ENCODE measurements at regions of chr11 and their contacts with region 1.

Region 1: DNA sequence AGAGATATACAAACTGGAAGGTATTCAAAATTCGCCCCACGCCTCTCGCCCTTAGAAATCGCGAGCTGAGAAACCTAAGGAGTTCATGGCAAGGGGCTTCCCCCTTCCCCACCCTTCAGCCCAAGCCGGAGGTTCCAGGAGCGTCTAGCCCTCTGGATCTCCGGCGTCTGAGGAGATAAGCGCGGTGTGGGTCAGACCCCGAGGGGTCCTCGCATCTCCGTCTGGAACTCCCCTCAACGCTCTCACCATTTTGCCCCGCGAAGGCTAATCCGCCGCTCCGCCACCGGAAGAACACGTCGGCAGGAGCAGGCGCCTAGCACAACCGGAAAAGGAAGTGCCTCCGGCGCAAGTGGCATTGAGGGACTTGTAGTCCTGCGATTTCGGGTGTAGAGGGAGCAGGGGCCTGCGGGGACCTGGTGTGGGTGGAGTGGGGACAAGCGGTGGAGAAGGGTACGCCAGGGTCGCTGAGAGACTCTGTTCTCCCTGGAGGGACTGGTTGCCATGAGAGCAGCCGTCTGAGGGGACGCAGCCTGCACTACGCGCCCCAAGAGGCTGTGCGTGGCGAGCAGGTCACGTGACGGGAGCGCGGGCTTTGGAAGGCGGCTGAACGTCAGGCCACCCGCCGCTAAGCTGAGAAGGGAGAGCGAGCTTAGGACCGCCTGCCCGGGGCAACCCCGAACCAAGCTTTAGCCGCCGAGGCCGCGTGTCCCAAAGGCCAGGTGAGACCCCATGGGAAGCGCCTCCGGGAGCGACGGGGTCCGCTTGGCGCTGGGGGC is at the starts of genes FEN1 and TMEM258:
- DNase-seq: peak; percentile 71 to 94 (median 88)
- ATAC-seq: peak; percentile 87
- H3K4me3 ChIP-seq: peak within 1 kb of the TSS; percentile 64 to 92
- H3K4me3 Mint-ChIP-seq: peak within 1 kb of the TSS; percentile 93
- H3K27ac ChIP-seq: peak within 1 kb of the TSS; percentile 88 to 96
- H3K27ac Mint-ChIP-seq: peak within 1 kb of the TSS; percentile 97
- H3K4me1 ChIP-seq: peaks cover 15% of the 10 kb centered on the region
- H3K4me1 Mint-ChIP-seq: peaks cover 37% of the 10 kb centered on the region
- H3K27me3 ChIP-seq: no peaks in the 10 kb centered on the region
- H3K27me3 Mint-ChIP-seq: no peaks in the 10 kb centered on the region
- CTCF ChIP-seq: no peak
- total RNA-seq, gene FEN1: 12.9 to 15.2 TPM
- total RNA-seq, gene TMEM258: 48.1 to 53.9 TPM

Region 2: DNA sequence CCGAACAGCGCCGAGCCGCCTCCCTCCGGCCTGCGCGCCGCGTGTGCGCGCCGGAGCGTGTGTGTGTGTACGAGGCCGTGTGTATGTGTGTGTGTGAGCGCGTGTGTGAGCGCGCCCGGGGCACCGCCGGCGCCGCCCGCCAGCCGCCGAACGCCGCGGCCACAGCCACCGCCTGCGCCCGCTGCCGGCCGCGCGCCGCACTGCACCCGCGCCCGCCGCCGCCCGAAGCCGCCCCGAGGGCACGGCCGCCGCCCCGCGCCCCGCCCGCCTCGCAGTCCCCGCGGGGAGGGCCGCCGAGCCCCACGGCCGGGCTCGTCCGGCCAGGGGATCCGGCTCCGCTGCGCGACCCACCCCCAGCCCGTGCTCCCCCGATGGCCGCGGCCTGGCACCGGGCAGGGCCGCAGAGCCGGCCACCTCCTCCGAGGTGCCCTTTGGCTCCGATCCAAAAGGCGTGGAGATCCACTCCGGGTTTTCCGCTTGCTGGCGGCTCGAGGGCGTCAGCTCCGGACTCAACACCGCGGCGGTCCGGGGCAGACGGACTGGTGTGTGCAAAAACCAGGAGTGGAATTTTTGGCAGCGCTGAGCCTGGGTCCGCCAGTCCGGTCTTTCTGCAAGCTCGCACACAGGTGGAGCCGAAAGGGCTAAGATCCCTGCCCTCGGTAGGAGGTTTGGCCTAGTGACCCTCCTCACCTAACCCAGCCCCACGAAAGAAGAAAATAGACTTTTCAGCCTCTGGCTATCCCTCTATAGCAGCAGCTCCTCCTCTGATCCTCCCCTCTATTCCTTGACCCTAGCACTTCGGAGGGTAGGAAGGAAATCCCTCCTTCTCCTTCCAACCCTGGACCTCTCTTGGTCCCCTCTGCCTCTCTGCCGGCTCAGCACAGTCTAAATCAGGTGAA is 211.2 kb before region 1 on chr11 and contains the start of gene SYT7:
- CTCF ChIA-PET with region 1: no interaction called
- POLR2A ChIA-PET with region 1: no interaction called
- intact Hi-C with region 1: loop called (anchors 5 to 10 kb)
- DNase-seq: peak; percentile 87 to 97 (median 93)
- ATAC-seq: peak; percentile 87
- H3K4me3 ChIP-seq: peak within 1 kb of the TSS; percentile 22 to 38
- H3K4me3 Mint-ChIP-seq: peak within 1 kb of the TSS; percentile 86
- H3K27ac ChIP-seq: no peak within 1 kb of the TSS
- H3K27ac Mint-ChIP-seq: peak within 1 kb of the TSS; percentile 33
- H3K4me1 ChIP-seq: peaks cover 14% of the 10 kb centered on the region
- H3K4me1 Mint-ChIP-seq: peaks cover 14% of the 10 kb centered on the region
- H3K27me3 ChIP-seq: peaks cover 13 to 20% of the 10 kb centered on the region in 2 experiments
- H3K27me3 Mint-ChIP-seq: peaks cover 36% of the 10 kb centered on the region
- CTCF ChIP-seq: no peak
- total RNA-seq, gene SYT7: not detected

Region 3: GRCh38 chr11:61769169-61769920 is 23.2 kb before region 1 on chr11:
- CTCF ChIA-PET with region 1: no interaction called
- POLR2A ChIA-PET with region 1: no interaction called
- intact Hi-C with region 1: no loop called
- DNase-seq: no peak
- ATAC-seq: no peak
- H3K4me3 ChIP-seq: no peak overlapping the region
- H3K4me3 Mint-ChIP-seq: no peak overlapping the region
- H3K27ac ChIP-seq: no peak overlapping the region
- H3K27ac Mint-ChIP-seq: no peak overlapping the region
- H3K4me1 ChIP-seq: peaks cover 5% of the 10 kb centered on the region
- H3K4me1 Mint-ChIP-seq: peaks cover 2% of the 10 kb centered on the region
- H3K27me3 ChIP-seq: no peaks in the 10 kb centered on the region
- H3K27me3 Mint-ChIP-seq: no peaks in the 10 kb centered on the region
- CTCF ChIP-seq: no peak

Region 4: DNA sequence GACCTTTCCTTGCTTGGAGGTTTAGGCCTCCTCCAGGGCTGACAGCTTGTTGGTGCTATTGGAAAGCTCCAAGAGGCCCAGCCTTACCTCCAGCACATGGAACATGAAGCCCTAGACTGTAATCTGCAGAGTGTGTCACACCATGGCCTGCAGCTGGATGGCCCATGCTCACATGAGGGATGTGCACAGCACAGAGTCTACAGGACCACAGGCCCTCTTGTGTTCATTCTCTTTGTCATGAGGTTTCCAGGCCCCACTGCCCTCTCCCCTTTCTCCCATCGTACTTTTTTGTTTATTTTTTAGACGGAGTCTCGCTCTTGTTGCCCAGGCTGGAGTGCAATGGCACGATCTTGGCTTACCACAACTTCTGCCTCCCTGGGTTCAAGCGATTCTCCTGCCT is 14.3 kb after region 1 on chr11:
- CTCF ChIA-PET with region 1: interaction called, 26 read pairs
- POLR2A ChIA-PET with region 1: no interaction called
- intact Hi-C with region 1: no loop called
- DNase-seq: no peak
- ATAC-seq: no peak
- H3K4me3 ChIP-seq: no peak overlapping the region
- H3K4me3 Mint-ChIP-seq: no peak overlapping the region
- H3K27ac ChIP-seq: no peak overlapping the region
- H3K27ac Mint-ChIP-seq: no peak overlapping the region
- H3K4me1 ChIP-seq: no peaks in the 10 kb centered on the region
- H3K4me1 Mint-ChIP-seq: no peaks in the 10 kb centered on the region
- H3K27me3 ChIP-seq: no peaks in the 10 kb centered on the region
- H3K27me3 Mint-ChIP-seq: no peaks in the 10 kb centered on the region
- CTCF ChIP-seq: no peak

Region 5: DNA sequence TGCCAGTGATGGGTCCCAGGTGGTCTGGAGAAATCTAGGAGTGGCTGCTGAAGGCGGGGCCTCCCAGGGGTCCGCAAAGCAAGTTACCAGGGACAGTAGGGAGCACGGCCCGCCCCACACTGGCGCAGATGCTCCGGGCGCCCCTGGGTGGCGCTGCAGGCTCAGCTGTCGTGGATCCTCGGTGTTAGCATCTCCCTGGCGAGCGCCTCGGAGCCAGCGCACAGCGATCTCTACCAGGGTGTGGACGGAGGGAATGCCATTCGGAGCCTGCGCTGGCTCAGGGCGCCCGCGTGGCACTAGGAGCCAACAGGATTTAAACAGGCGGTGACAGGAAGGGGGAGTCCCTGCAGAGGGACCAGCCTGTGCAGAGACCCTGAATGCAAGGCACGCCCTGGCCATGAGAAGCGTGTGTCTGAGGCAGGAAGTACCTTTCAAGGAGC is 78.7 kb after region 1 on chr11:
- CTCF ChIA-PET with region 1: interaction called, 4 read pairs
- POLR2A ChIA-PET with region 1: no interaction called
- intact Hi-C with region 1: loop called (anchors 1 to 5 kb)
- DNase-seq: peak; percentile 30 to 74 (median 64)
- ATAC-seq: peak; percentile 94
- H3K4me3 ChIP-seq: no peak overlapping the region
- H3K4me3 Mint-ChIP-seq: peak overlapping the region; percentile 64
- H3K27ac ChIP-seq: no peak overlapping the region
- H3K27ac Mint-ChIP-seq: no peak overlapping the region
- H3K4me1 ChIP-seq: no peaks in the 10 kb centered on the region
- H3K4me1 Mint-ChIP-seq: peaks cover 3% of the 10 kb centered on the region
- H3K27me3 ChIP-seq: no peaks in the 10 kb centered on the region
- H3K27me3 Mint-ChIP-seq: no peaks in the 10 kb centered on the region
- CTCF ChIP-seq: peak; percentile 89

Region 6: DNA sequence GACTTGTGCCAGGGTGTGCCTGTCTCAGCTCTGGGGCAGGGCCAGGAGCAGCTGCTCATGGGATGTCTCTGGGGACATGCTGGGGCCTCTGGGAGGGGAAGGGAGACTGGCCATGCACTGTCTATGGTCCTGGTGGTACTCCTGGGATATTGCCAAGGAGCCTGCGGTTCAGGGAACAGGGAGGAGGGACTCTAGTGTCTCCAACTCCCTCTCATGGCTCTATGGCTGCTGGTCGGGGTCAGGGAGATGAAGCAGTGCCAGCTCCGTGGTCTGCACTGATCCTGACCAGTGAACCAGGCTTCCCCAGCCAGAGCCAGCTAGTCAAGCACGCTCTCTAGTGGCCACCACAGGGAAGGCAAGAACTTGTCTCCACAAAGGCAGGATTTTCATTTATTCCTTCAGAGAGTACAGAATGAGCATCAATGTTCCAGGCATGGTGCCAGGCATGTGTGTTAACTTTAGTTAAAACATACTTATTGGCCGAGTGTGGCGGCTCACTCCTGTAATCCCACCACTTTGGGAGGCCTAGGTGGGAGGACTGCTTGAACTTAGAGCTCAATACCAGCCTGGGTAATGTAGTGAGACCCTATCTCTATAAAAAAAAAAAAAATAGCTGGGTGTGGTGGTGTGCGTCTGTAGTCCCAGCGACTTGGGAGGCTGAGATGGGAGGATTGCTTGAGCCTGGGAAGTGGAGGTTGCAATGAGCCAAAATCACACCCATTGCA is 155.2 kb after region 1 on chr11:
- CTCF ChIA-PET with region 1: interaction called, 70 read pairs
- POLR2A ChIA-PET with region 1: interaction called, 4 read pairs
- intact Hi-C with region 1: loop called in 1 of 2 experiments (anchors 1 kb)
- DNase-seq: peak; percentile 34 to 78 (median 69)
- ATAC-seq: peak; percentile 82
- H3K4me3 ChIP-seq: no peak overlapping the region
- H3K4me3 Mint-ChIP-seq: no peak overlapping the region
- H3K27ac ChIP-seq: no peak overlapping the region
- H3K27ac Mint-ChIP-seq: no peak overlapping the region
- H3K4me1 ChIP-seq: no peaks in the 10 kb centered on the region
- H3K4me1 Mint-ChIP-seq: no peaks in the 10 kb centered on the region
- H3K27me3 ChIP-seq: no peaks in the 10 kb centered on the region
- H3K27me3 Mint-ChIP-seq: peaks cover 8% of the 10 kb centered on the region
- CTCF ChIP-seq: peak; percentile 76

Region 7: DNA sequence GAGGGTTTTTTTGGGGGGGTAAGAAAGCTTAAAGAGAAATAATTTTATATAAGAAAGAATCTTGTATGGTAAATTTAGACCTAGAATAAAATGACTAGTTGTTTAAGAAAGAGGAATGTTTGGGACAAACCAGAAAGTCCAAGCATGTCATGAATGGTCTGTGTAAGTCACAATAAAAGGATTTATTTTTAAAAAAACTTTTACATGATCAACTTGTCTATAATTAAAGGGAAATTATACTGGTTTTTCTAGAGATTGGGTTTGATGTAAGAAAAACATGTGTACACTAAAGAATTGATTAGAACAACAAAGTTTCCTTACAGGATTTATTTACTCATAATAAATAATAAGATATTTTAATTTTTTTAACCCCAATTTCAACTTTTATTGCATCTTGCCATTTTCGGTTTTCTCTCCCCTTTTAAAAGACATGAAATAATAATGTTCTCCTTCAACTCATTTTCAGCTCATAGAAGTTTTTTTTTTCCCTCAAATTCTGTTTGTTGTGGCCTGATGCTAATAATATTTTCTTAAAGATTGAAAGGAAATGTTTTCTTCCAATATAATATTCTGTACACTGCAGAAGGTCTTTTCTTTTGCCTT is 295.9 kb after region 1 on chr11:
- CTCF ChIA-PET with region 1: interaction called, 10 read pairs
- POLR2A ChIA-PET with region 1: no interaction called
- intact Hi-C with region 1: loop called in 1 of 2 experiments (anchors 2 kb)
- DNase-seq: no peak
- ATAC-seq: no peak
- H3K4me3 ChIP-seq: no peak overlapping the region
- H3K4me3 Mint-ChIP-seq: no peak overlapping the region
- H3K27ac ChIP-seq: no peak overlapping the region
- H3K27ac Mint-ChIP-seq: no peak overlapping the region
- H3K4me1 ChIP-seq: no peaks in the 10 kb centered on the region
- H3K4me1 Mint-ChIP-seq: no peaks in the 10 kb centered on the region
- H3K27me3 ChIP-seq: no peaks in the 10 kb centered on the region
- H3K27me3 Mint-ChIP-seq: peaks cover 7% of the 10 kb centered on the region
- CTCF ChIP-seq: no peak

Region 8: GRCh38 chr11:62129590-62130292 is 337.2 kb after region 1 on chr11:
- CTCF ChIA-PET with region 1: no interaction called
- POLR2A ChIA-PET with region 1: no interaction called
- intact Hi-C with region 1: no loop called
- DNase-seq: no peak
- ATAC-seq: no peak
- H3K4me3 ChIP-seq: no peak overlapping the region
- H3K4me3 Mint-ChIP-seq: no peak overlapping the region
- H3K27ac ChIP-seq: no peak overlapping the region
- H3K27ac Mint-ChIP-seq: no peak overlapping the region
- H3K4me1 ChIP-seq: peaks cover 9% of the 10 kb centered on the region
- H3K4me1 Mint-ChIP-seq: peaks cover 28% of the 10 kb centered on the region
- H3K27me3 ChIP-seq: no peaks in the 10 kb centered on the region
- H3K27me3 Mint-ChIP-seq: no peaks in the 10 kb centered on the region
- CTCF ChIP-seq: no peak

Region 9: DNA sequence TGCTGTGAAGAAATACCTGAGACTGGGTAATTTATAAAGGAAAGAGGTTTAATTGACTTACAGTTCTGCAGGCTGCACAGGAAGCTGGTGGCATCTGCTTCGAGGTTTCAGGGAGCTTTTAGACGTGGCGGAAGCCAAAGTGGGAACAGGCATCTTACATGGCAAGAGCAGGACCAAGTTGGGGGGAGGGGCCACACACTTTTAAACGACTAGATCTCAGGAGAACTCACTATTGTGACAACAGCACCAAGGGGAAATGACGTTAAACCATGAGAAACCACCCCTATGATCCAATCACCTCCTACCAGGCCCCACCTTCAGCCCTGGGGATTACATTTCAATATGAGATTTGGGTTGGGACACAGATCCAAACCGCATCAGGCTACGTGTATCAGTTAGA is 517.5 kb after region 1 on chr11:
- CTCF ChIA-PET with region 1: no interaction called
- POLR2A ChIA-PET with region 1: no interaction called
- intact Hi-C with region 1: loop called in 1 of 2 experiments (anchors 5 kb)
- DNase-seq: peak in 1 of 9 experiments; percentile 26
- ATAC-seq: no peak
- H3K4me3 ChIP-seq: no peak overlapping the region
- H3K4me3 Mint-ChIP-seq: no peak overlapping the region
- H3K27ac ChIP-seq: no peak overlapping the region
- H3K27ac Mint-ChIP-seq: no peak overlapping the region
- H3K4me1 ChIP-seq: peaks cover 6% of the 10 kb centered on the region
- H3K4me1 Mint-ChIP-seq: peaks cover 13% of the 10 kb centered on the region
- H3K27me3 ChIP-seq: no peaks in the 10 kb centered on the region
- H3K27me3 Mint-ChIP-seq: peaks cover 26% of the 10 kb centered on the region
- CTCF ChIP-seq: no peak

Measured in CD8-positive, alpha-beta T cell (primary cell).